AG04450 (cell line): ENCODE measurements at regions of chr13 and their contacts with region 1.

Region 1: DNA sequence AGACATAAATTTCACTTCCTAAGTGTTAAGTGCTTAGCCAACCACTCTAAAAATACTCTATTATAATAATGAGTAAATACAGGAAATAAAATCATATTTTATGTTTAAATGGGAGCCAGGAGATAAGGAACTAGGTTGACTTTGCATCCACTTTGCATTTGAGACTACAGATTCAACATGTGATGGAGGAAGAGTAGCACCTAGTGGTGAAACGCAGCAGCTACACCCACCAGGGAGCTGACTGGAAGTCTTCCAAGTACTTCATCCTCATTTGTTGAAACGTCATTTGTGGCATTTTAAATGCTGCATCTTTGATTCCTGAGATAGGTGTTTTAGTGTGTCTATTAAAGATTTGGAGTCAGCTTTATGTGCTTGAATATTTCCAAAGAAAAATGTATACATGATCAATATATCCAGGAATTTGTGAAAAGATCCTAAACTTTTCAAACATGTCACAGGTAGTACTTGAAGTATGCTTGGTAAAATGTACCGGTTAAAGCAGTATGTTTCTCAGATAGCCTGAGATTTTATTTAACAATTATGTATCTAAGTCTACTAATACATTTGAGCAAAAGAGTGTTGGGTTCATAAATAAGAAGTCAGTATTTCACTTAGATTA is 17.4 kb upstream of the KCTD12 start:
- DNase-seq: peak; percentile 50
- H3K4me3 ChIP-seq: no peak overlapping the region
- H3K27ac ChIP-seq: no peak overlapping the region
- H3K27me3 ChIP-seq: peaks cover 23% of the 10 kb centered on the region
- CTCF ChIP-seq: peak; percentile 100

Region 2: GRCh38 chr13:76667551-76667950 is 236.1 kb before region 1 on chr13:
- CTCF ChIA-PET with region 1: interaction called, 59 read pairs
- POLR2A ChIA-PET with region 1: no interaction called
- DNase-seq: peak; percentile 29
- H3K4me3 ChIP-seq: no peak overlapping the region
- H3K27ac ChIP-seq: no peak overlapping the region
- H3K27me3 ChIP-seq: peaks cover 3% of the 10 kb centered on the region
- CTCF ChIP-seq: peak; percentile 63

Region 3: DNA sequence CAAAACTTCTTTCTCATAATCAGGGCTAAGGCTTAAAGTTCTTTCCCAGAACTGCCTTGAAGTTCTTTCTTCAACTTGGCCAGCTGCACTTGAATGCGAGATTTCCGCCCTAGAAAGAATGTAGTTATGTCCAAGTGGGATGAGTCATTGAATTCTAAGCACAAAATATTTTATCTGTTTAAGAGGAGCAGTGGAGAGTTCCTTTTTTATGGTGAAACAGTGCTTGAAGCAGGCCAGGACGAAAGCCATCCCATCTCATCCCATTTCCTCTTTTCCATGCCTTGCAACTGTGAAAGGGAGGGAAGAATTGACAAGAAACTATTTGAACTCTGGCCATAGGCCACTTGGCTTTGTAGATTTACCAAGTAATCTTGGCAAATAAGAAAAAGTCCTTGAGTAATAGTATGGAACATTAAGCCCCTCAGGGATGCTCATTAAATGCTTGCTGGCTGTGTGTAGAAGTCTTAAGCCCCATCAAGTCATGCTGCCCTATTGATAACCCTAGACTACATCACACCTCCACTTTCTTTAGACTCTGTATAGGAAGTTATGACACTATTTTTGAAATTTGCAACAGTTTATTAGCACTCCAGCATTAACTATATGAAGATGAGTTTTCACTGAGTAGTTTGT is 192.0 kb before region 1 on chr13:
- CTCF ChIA-PET with region 1: no interaction called
- POLR2A ChIA-PET with region 1: no interaction called
- DNase-seq: peak; percentile 81
- H3K4me3 ChIP-seq: no peak overlapping the region
- H3K27ac ChIP-seq: peak overlapping the region; percentile 53
- H3K27me3 ChIP-seq: no peaks in the 10 kb centered on the region
- CTCF ChIP-seq: no peak